Activated CD4-positive, alpha-beta T cell treated with anti-CD3 and anti-CD28 coated beads, Interleukin-2, amount 10 ng/mL, durations not matched to agents 24 days and 14 days (primary cell): ENCODE measurements at regions of chr17 and their contacts with region 1.

Region 1: GRCh38 chr17:66906321-66907278 is 57.9 kb upstream of the CACNG4 start:
- DNase-seq: peak; percentile 88
- H3K4me3 Mint-ChIP-seq: no peak overlapping the region
- H3K27ac Mint-ChIP-seq: no peak overlapping the region
- H3K4me1 Mint-ChIP-seq: peaks cover 2% of the 10 kb centered on the region
- H3K27me3 Mint-ChIP-seq: peaks cover 4% of the 10 kb centered on the region

Region 2: DNA sequence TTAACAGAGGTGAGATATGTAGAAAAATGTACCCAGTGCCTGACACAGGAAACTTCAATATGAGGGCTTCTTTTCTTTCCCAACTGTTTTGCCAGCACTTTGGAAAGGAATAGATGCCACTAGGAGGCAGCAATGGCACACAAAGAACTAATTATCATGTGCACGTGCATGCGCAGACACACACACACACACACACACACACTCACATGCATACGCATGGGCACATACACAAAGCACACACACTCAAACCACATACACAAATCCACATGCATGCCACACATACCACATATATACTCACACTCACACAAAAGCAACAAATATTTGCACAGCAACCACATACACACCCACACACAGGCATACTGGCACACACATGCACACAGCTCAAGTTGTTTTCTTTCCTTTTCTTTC is 705.9 kb before region 1 on chr17:
- intact Hi-C with region 1: loop called (anchors 1 kb)
- DNase-seq: peak; percentile 80
- H3K4me3 Mint-ChIP-seq: no peak overlapping the region
- H3K27ac Mint-ChIP-seq: peak overlapping the region; percentile 43
- H3K4me1 Mint-ChIP-seq: peaks cover 9% of the 10 kb centered on the region
- H3K27me3 Mint-ChIP-seq: no peaks in the 10 kb centered on the region

Region 3: DNA sequence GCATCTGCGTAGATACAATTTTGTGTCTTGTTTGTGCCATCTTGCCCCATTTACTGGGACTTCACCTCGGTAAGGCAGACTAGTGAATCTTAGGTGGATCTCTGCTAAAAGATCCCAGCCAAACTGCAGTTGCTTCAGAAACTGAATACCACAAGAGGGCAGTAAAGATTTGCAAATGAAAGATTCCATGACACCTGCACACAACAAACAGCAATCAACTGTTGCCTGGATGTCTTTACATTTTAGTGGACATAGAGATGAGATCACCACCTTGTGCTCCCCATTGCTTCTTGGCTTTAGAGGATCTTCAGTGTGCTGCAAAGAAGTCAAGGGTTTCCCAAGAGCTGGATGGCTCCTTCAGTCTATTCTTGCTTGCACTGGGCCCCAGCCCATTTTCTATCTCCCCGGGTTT is 190.8 kb before region 1 on chr17:
- intact Hi-C with region 1: loop called (anchors 1 kb)
- DNase-seq: peak; percentile 76
- H3K4me3 Mint-ChIP-seq: no peak overlapping the region
- H3K27ac Mint-ChIP-seq: peak overlapping the region; percentile 17
- H3K4me1 Mint-ChIP-seq: peaks cover 34% of the 10 kb centered on the region
- H3K27me3 Mint-ChIP-seq: no peaks in the 10 kb centered on the region

Region 4: GRCh38 chr17:66829386-66829864 is 77.2 kb before region 1 on chr17:
- intact Hi-C with region 1: loop called (anchors 2 kb)
- DNase-seq: peak; percentile 76
- H3K4me3 Mint-ChIP-seq: no peak overlapping the region
- H3K27ac Mint-ChIP-seq: no peak overlapping the region
- H3K4me1 Mint-ChIP-seq: peaks cover 4% of the 10 kb centered on the region
- H3K27me3 Mint-ChIP-seq: peaks cover 59% of the 10 kb centered on the region

Region 5: GRCh38 chr17:66930933-66931332 is 24.3 kb after region 1 on chr17:
- intact Hi-C with region 1: no loop called
- DNase-seq: no peak
- H3K4me3 Mint-ChIP-seq: no peak overlapping the region
- H3K27ac Mint-ChIP-seq: no peak overlapping the region
- H3K4me1 Mint-ChIP-seq: no peaks in the 10 kb centered on the region
- H3K27me3 Mint-ChIP-seq: peaks cover 20% of the 10 kb centered on the region

Region 6: DNA sequence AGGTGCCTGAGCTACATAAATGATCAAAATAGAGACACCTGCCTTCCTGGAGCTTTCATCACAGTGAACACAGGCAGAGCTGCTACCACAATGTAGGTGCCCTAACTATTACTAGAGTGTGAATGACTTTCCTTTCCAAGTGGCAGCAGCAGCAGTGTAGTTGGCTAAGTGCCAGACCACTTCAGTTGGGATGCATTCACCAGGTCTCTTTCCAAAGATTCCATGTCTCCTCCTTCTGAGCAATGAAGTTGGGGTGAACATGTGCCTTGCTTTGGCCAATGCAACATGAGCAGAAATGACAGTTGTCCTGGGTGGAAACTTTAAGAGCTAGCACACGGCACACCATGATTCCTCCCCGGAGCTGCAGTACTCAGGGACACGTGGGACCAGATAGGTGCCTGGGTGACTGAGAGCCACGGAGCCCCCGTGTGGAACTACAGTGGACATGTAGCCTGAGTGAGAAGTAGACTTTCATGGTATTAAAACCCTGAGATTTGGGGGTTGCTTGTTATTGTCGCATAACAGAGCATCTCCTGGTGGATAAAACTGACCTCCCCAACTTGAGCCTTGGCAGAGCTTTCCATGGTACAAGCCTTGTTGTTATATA is 34.8 kb after region 1 on chr17:
- intact Hi-C with region 1: no loop called
- DNase-seq: no peak
- H3K4me3 Mint-ChIP-seq: no peak overlapping the region
- H3K27ac Mint-ChIP-seq: no peak overlapping the region
- H3K4me1 Mint-ChIP-seq: peaks cover 5% of the 10 kb centered on the region
- H3K27me3 Mint-ChIP-seq: peaks cover 46% of the 10 kb centered on the region